Activated CD4-positive, alpha-beta T cell treated with anti-CD3 and anti-CD28 coated beads, Interleukin-2, amount 10 ng/mL, durations not matched to agents 24 days and 14 days (primary cell): ENCODE measurements at regions of chr7 and their contacts with region 1.

Region 1: GRCh38 chr7:23013715-23014649 is at the start of gene HYCC1:
- DNase-seq: peak; percentile 100
- H3K4me3 Mint-ChIP-seq: peak within 1 kb of the TSS; percentile 92
- H3K27ac Mint-ChIP-seq: peak within 1 kb of the TSS; percentile 88
- H3K4me1 Mint-ChIP-seq: peaks cover 29% of the 10 kb centered on the region
- H3K27me3 Mint-ChIP-seq: no peaks in the 10 kb centered on the region
- total RNA-seq, gene HYCC1: 33.7 and 41.5 TPM in 2 replicates

Region 2: GRCh38 chr7:22822486-22823141 is 191.4 kb before region 1 on chr7 and contains the start of gene TOMM7:
- intact Hi-C with region 1: loop called (anchors 1 kb)
- DNase-seq: peak; percentile 95
- H3K4me3 Mint-ChIP-seq: peak within 1 kb of the TSS; percentile 99
- H3K27ac Mint-ChIP-seq: peak within 1 kb of the TSS; percentile 97
- H3K4me1 Mint-ChIP-seq: peaks cover 32% of the 10 kb centered on the region
- H3K27me3 Mint-ChIP-seq: peaks cover 25% of the 10 kb centered on the region
- total RNA-seq, gene TOMM7: 196 and 201 TPM in 2 replicates

Region 3: DNA sequence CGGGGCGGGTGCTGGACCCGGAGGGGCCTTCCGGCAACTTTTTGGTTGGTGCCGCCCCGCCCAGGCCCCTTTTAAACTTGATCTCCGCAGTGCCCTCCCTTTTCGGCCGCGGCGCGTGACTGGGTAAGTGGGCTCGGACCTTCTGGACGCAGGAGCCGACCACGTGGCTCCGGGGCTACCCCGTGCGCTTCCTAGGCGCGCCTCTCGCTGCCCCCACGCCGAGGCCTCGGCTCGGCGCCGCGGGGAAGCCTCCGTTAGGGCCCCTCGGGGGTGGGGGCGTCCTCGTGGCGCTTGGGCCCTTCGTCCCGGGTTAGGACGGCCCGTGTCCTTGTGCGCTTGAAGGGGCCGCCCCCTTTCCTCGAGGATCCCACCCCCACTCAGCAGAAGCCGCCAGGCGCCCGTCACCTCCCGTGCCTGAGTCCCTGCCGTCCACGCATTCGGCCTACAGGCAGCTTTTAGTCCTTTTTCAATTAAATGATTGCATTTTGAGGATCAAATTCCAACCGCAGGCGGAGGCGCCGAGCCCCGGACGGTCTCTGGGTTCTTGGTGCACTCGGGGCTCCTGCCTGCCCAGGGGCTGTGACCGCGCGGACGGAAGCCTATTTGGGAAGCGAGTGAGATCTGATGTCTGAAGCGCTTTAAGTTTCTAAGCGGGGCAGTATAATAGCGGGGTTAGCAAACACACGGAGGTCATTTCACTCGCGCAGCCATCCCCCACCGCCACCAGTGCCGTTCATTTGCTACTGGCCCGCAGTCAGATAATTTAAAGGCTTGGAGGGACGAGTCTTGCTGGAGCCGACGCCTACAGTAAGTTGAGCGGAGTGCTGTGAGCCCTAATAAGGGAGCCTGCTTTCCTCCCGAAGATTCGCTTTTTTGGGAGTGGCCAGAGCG is 159.6 kb before region 1 on chr7:
- intact Hi-C with region 1: loop called (anchors 2 kb)
- DNase-seq: peak; percentile 94
- H3K4me3 Mint-ChIP-seq: peak overlapping the region; percentile 98
- H3K27ac Mint-ChIP-seq: peak overlapping the region; percentile 93
- H3K4me1 Mint-ChIP-seq: peaks cover 28% of the 10 kb centered on the region
- H3K27me3 Mint-ChIP-seq: peaks cover 1% of the 10 kb centered on the region

Region 4: DNA sequence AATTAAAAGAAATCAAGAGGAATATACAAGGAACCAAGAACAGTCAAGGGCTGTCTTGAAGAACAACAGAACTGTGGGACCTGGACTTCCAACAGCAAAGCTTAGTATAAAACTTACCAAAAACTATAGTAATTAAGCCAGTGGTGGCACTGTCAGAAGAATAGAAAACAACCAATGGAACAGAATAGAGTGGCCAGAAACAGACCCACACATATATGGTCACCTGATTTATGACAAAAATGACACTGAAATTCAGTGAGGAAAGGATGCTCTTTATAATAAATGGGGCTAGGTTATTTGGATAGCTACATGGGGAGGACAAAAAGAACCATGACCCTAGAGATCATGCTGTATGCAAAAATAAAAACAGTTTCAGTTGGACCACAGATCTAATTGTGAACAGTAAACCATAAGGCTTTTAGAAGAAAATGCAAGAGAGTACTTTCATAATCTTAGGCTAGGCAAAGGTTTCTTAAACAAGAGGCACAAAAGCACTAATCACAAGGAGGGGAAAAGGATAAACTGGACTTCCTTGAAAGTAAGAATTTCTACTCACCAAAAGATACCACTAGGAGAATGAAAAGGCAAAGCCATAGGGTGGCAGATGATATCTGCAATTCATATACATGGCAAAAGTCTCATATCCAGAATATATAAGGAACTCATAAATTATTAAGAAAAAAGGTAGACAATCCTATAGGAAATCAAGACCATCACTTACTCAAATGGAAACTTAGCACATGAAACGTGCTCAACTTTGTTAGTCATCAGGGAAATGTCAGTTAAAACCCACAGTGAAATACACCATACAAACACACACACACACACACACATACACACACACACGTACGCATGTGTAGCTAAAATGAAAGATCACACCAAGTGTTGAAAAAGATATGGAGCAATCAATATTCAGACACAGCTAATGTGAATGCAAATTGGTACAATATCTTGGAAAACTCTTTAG is 20.8 kb before region 1 on chr7:
- intact Hi-C with region 1: loop called (anchors 1 kb)
- DNase-seq: peak; percentile 72
- H3K4me3 Mint-ChIP-seq: peak overlapping the region; percentile 8
- H3K27ac Mint-ChIP-seq: peak overlapping the region; percentile 61
- H3K4me1 Mint-ChIP-seq: peaks cover 42% of the 10 kb centered on the region
- H3K27me3 Mint-ChIP-seq: no peaks in the 10 kb centered on the region

Region 5: GRCh38 chr7:23000597-23001360 is 13.2 kb before region 1 on chr7:
- intact Hi-C with region 1: loop called (anchors 1 kb)
- DNase-seq: peak; percentile 54
- H3K4me3 Mint-ChIP-seq: peak overlapping the region; percentile 34
- H3K27ac Mint-ChIP-seq: peak overlapping the region; percentile 39
- H3K4me1 Mint-ChIP-seq: peaks cover 50% of the 10 kb centered on the region
- H3K27me3 Mint-ChIP-seq: no peaks in the 10 kb centered on the region

Region 6: DNA sequence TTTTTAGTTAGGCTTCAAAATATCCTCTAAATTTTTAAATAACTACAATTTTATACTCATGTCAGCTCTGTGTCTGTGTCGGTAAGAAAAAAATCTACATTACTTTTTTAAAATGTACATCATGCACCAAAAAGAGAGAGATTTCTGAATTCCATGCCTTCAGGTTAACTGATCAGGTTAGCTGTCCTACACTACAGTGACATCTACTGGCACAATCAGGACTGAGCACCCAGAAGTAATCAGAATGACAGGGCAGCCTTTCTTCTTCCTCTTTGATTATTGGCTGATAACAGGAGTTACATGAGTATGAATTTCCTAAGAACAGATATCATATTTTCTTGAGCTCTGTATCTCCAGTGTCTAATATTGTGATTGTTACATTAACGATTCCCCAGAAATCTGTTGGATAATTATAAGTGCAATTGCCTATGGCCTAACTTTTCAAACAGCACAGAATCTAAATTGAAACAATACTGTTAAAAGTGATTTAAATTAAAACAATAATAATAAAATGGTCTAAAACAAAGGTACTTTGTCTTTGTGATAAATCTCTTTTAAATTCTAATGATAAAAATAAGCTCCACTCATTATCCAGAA is 41.7 kb after region 1 on chr7:
- intact Hi-C with region 1: loop called (anchors 1 kb)
- DNase-seq: peak; percentile 90
- H3K4me3 Mint-ChIP-seq: no peak overlapping the region
- H3K27ac Mint-ChIP-seq: no peak overlapping the region
- H3K4me1 Mint-ChIP-seq: peaks cover 6% of the 10 kb centered on the region
- H3K27me3 Mint-ChIP-seq: peaks cover 11% of the 10 kb centered on the region

Region 7: GRCh38 chr7:23531794-23532489 is 518.0 kb after region 1 on chr7 and contains the start of gene TRA2A:
- intact Hi-C with region 1: loop called (anchors 5 kb)
- DNase-seq: peak; percentile 99
- H3K4me3 Mint-ChIP-seq: peak within 1 kb of the TSS; percentile 97
- H3K27ac Mint-ChIP-seq: peak within 1 kb of the TSS; percentile 99
- H3K4me1 Mint-ChIP-seq: peaks cover 29% of the 10 kb centered on the region
- H3K27me3 Mint-ChIP-seq: no peaks in the 10 kb centered on the region
- total RNA-seq, gene TRA2A: 96.8 and 103 TPM in 2 replicates